ENCODE measurements at regions of chr16 and their contacts with region 1.

Region 1: DNA sequence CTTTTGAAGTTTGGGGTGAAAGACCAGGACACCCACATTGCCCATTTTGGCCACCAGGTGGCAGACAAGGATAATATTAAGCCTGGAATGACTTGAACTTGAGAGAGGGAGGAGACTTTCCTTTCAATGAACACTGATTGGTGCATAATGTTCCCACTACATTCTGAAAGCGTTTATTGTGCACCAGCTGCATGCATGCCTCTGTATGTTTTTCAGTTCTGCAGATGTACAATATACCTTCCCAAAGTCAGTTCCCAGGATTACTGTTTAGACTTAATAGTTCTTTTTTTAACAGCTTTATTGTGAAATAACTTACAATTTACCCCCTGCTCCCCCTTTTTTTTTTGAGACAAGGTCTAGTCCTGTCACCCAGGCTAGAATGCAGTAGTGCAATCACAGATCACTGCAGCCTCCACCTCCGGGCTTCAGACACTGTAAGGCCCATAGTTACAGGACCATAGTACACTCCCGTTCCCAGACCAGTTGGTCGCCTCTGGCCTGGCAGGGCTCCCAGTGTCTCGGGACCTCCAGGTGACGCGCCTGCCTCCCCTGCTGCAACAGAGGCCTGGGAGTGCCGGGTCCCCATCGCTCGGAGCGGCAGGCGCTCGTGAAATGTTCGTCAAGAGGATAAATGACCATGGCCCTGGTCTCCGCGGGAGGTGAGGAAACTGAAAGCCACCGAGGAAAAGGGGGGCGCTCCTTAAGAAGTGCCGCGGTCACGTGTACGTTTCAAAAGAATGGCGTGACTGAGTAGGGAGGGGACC is 12.2 kb downstream of the CES2 start:
- DNase-seq: peak; percentile 61
- ATAC-seq: peak; percentile 93
- H3K4me3 Mint-ChIP-seq: peak overlapping the region; percentile 79
- H3K27ac Mint-ChIP-seq: peak overlapping the region; percentile 24
- H3K4me1 Mint-ChIP-seq: peaks cover 17% of the 10 kb centered on the region
- H3K27me3 Mint-ChIP-seq: peaks cover 21% of the 10 kb centered on the region
- CTCF ChIP-seq: peak; percentile 18

Region 2: GRCh38 chr16:66682271-66682670 is 265.2 kb before region 1 on chr16:
- CTCF ChIA-PET with region 1: no interaction called
- POLR2A ChIA-PET with region 1: no interaction called
- intact Hi-C with region 1: no loop called
- DNase-seq: no peak
- ATAC-seq: no peak
- H3K4me3 Mint-ChIP-seq: no peak overlapping the region
- H3K27ac Mint-ChIP-seq: no peak overlapping the region
- H3K4me1 Mint-ChIP-seq: no peaks in the 10 kb centered on the region
- H3K27me3 Mint-ChIP-seq: peaks cover 2% of the 10 kb centered on the region
- CTCF ChIP-seq: no peak

Region 3: GRCh38 chr16:66880288-66881013 is 67.0 kb before region 1 on chr16 and contains the start of gene PDP2:
- CTCF ChIA-PET with region 1: no interaction called
- POLR2A ChIA-PET with region 1: no interaction called
- intact Hi-C with region 1: loop called (anchors 5 kb)
- DNase-seq: peak; percentile 81
- ATAC-seq: peak; percentile 99
- H3K4me3 Mint-ChIP-seq: peak within 1 kb of the TSS; percentile 99
- H3K27ac Mint-ChIP-seq: peak within 1 kb of the TSS; percentile 86
- H3K4me1 Mint-ChIP-seq: peaks cover 12% of the 10 kb centered on the region
- H3K27me3 Mint-ChIP-seq: no peaks in the 10 kb centered on the region
- CTCF ChIP-seq: no peak
- total RNA-seq, gene PDP2: 13.0 and 13.2 TPM in 2 replicates